Dendritic cell treated with granulocyte-macrophage colony-stimulating factor and Interleukin-4, amounts not matched to agents 40 ng/mL and 50 ng/mL, for 4 days (primary cell): ENCODE measurements at regions of chr6 and their contacts with region 1.

Region 1: GRCh38 chr6:143510991-143511891 is at the start of gene FUCA2:
- H3K4me3 Mint-ChIP-seq: peak within 1 kb of the TSS; percentile 97
- H3K27ac Mint-ChIP-seq: peak within 1 kb of the TSS; percentile 96
- H3K4me1 Mint-ChIP-seq: peaks cover 70% of the 10 kb centered on the region
- H3K27me3 Mint-ChIP-seq: no peaks in the 10 kb centered on the region

Region 2: GRCh38 chr6:143357561-143358255 is 153.5 kb before region 1 on chr6:
- intact Hi-C with region 1: no loop called
- H3K4me3 Mint-ChIP-seq: no peak overlapping the region
- H3K27ac Mint-ChIP-seq: no peak overlapping the region
- H3K4me1 Mint-ChIP-seq: no peaks in the 10 kb centered on the region
- H3K27me3 Mint-ChIP-seq: no peaks in the 10 kb centered on the region

Region 3: DNA sequence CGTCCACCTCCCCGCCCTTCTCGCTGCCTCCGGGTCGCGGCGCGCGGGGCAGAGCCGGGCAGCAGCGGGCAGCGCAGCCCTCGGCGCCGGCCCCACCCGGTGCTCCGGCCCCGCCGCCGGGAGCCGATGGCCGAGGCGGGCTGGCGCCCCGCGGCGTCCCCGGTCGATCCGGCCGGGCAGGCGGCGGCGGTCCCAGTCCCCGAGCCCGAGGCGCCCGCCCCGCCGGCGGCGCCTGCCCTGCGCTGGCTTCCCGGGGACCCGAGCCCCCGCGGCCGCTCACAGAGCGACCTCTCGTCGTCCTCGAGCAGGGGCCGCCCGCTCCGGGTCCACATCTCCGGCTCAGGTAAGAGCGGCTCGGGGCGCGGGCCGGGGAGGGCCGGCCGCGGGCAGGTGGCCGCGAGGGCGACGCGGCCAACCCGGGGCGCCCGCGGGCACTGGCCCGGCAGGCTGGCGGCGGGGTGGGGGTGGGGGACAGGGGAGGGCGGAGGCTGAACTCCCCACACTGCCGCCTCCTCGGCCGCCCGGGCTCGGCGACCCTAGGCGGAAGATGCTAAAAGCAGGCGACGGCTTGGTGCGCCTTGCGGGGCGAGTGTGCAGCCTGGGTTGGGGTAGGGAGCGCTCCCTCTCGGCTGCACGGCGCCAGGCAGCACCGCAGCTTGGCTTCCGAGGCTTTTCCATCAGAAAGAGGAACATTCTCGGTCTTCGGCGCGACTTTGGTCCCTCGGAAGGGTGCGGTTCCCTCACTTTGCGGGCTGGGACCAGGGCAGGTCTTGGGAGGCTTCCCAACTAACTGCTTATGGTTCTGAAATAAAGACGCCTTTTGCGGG is 25.8 kb after region 1 on chr6:
- intact Hi-C with region 1: loop called (anchors 1 kb)
- H3K4me3 Mint-ChIP-seq: peak overlapping the region; percentile 74
- H3K27ac Mint-ChIP-seq: peak overlapping the region; percentile 76
- H3K4me1 Mint-ChIP-seq: peaks cover 50% of the 10 kb centered on the region
- H3K27me3 Mint-ChIP-seq: no peaks in the 10 kb centered on the region